OCI-LY7 (cell line): ENCODE measurements at regions of chr18 and their contacts with region 1.

Region 1: DNA sequence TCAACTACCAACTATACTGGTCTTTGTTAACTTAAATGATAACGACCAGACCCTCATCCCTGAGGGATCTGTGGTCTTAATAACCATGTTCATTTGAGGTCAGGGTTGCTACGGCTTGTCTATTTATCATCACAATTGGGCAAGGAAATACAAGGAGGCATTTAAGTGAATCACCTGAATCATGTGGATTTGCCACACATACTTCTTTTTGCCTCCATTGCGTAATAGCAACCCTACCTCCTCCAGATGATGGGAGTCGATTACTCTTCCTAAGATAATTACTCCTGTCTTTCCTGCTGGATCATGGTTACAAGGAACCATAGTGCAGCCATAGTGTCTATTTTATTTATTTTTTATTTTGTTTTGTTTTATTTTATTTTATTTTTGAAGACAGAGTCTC is 42.2 kb downstream of the TAF4B start:
- DNase-seq: no peak
- H3K4me3 ChIP-seq: no peak overlapping the region
- H3K27ac ChIP-seq: no peak overlapping the region
- H3K4me1 ChIP-seq: peaks cover 13% of the 10 kb centered on the region
- CTCF ChIP-seq: no peak

Region 2: DNA sequence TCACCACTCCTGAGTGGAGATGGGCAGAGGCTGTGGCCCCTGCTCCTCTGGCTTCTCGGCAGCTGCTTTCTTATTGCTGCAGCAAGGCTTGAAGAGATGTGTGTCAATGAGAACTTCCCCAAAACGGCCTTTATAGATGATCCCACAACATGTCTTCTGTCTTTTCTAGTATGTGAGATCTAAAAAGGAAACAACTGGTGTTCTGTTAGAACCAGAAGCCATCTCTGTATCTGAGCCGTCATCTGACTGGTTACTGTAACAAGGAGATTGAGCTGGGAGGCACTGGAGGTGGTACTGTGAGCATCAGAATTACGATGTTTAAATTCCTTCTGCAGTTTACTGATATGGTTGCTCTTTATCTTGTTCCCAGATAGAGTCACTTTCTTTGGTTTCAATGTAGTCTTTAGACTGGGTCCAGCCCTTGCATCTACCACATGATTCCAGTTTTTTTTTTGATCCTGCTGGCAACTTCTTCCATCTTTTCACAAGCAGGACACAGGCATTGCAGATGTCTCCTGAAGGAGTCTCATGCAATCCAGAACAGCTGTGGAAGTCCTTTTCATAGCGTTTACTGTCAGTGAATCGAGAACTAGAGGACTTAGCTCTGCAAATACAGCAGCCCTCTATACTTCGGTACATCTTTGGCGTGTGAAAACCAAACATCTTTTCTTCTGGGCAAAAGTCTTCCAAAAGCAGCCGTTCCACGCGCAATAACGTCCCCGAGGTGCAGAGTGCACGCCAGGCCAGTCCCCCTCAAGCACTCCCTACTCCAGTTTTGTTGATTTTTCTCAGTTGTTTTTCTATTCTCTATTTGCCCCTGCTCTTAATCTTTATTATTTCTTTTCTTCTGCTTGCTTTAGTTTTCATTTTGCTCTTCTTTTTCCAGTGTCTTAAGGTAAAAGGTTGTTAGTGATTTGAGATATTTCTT is 12.5 kb before region 1 on chr18:
- CTCF ChIA-PET with region 1: no interaction called
- POLR2A ChIA-PET with region 1: interaction called, 13 read pairs
- intact Hi-C with region 1: no loop called
- DNase-seq: peak; percentile 55
- H3K4me3 ChIP-seq: no peak overlapping the region
- H3K27ac ChIP-seq: peak overlapping the region; percentile 51
- H3K4me1 ChIP-seq: peaks cover 57% of the 10 kb centered on the region
- CTCF ChIP-seq: no peak